ENCODE measurements at regions of chr5 and their contacts with region 1.

Region 1: GRCh38 chr5:68272289-68272688 is 56.7 kb downstream of the PIK3R1 start:
- DNase-seq: peak in 2 of 5 donors; percentile 44 to 50
- H3K4me3 ChIP-seq: no peak overlapping the region
- H3K4me3 Mint-ChIP-seq: peak overlapping the region in 4 of 8 donors; percentile 15 to 46 (median 22)
- H3K27ac ChIP-seq: no peak overlapping the region
- H3K27ac Mint-ChIP-seq: peak overlapping the region; percentile 56 to 99 (median 80)
- H3K4me1 ChIP-seq: peaks cover 97% of the 10 kb centered on the region
- H3K4me1 Mint-ChIP-seq: peaks cover 66 to 95% (median 81%) of the 10 kb centered on the region in 4 donors
- H3K27me3 ChIP-seq: no peaks in the 10 kb centered on the region
- H3K27me3 Mint-ChIP-seq: no peaks in the 10 kb centered on the region

Region 2: GRCh38 chr5:68086857-68087256 is 185.4 kb before region 1 on chr5:
- CTCF ChIA-PET with region 1: no interaction called
- POLR2A ChIA-PET with region 1: no interaction called
- intact Hi-C with region 1: no loop called
- DNase-seq: no peak
- H3K4me3 ChIP-seq: no peak overlapping the region
- H3K4me3 Mint-ChIP-seq: no peak overlapping the region
- H3K27ac ChIP-seq: no peak overlapping the region
- H3K27ac Mint-ChIP-seq: no peak overlapping the region
- H3K4me1 ChIP-seq: no peaks in the 10 kb centered on the region
- H3K4me1 Mint-ChIP-seq: no peaks in the 10 kb centered on the region
- H3K27me3 ChIP-seq: no peaks in the 10 kb centered on the region
- H3K27me3 Mint-ChIP-seq: peaks cover 4 to 10% of the 10 kb centered on the region in 2 donors

Region 3: DNA sequence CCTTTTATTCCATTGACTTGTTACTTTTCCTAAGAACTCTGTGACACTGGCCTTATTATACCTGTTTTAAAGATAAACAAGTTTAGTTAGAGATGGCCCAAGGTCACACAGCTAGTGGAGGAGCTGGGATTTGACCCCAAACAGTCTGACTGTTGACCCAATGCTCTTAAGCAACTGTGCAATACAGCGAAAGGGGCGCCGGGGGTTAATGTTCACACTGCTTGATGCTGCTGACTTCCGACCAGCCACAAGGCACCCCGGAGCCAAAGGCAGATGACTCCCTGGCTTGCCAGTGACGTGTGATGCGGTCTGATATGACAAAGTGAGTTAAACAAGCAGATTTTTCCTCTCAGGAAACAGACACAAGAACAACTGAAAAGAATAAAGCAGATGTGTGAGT is 32.8 kb before region 1 on chr5:
- CTCF ChIA-PET with region 1: interaction called, 7 read pairs
- POLR2A ChIA-PET with region 1: no interaction called
- intact Hi-C with region 1: loop called (anchors 5 kb)
- DNase-seq: peak; percentile 76 to 93 (median 79)
- H3K4me3 ChIP-seq: no peak overlapping the region
- H3K4me3 Mint-ChIP-seq: peak overlapping the region in 7 of 8 donors; percentile 34 to 76 (median 60)
- H3K27ac ChIP-seq: peak overlapping the region; percentile 20
- H3K27ac Mint-ChIP-seq: peak overlapping the region; percentile 73 to 97 (median 89)
- H3K4me1 ChIP-seq: peaks cover 77% of the 10 kb centered on the region
- H3K4me1 Mint-ChIP-seq: peaks cover 67 to 90% (median 78%) of the 10 kb centered on the region in 4 donors
- H3K27me3 ChIP-seq: no peaks in the 10 kb centered on the region
- H3K27me3 Mint-ChIP-seq: no peaks in the 10 kb centered on the region

Region 4: DNA sequence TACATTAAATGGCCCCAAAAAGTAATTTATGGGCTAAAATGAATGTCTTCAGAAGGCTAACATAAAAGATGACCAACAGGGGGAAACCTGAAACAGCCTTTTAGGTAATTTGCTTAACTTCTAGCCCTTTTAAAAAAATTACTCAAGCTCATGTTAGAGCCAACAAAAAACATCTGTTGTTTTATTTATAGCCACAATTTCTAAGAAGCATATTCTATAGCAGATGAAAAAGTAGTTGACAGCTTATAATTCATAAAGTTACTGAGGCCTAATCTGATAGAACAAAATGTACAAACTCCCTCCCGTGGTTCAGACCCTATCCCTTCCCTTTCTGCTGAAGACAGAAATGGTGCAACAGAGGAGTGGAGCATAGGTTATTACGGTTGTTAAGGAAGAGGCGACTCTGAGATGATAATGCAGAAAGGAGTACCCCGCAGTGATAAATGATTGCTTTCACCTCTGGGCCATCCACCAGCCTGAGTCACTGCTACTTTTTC is 10.7 kb before region 1 on chr5:
- CTCF ChIA-PET with region 1: interaction called, 124 read pairs
- POLR2A ChIA-PET with region 1: interaction called, 179 read pairs
- intact Hi-C with region 1: loop called (anchors 1 kb)
- DNase-seq: no peak
- H3K4me3 ChIP-seq: no peak overlapping the region
- H3K4me3 Mint-ChIP-seq: peak overlapping the region in 3 of 8 donors; percentile 17 to 47 (median 31)
- H3K27ac ChIP-seq: no peak overlapping the region
- H3K27ac Mint-ChIP-seq: peak overlapping the region; percentile 22 to 78 (median 68)
- H3K4me1 ChIP-seq: peaks cover 93% of the 10 kb centered on the region
- H3K4me1 Mint-ChIP-seq: peaks cover 78 to 93% (median 85%) of the 10 kb centered on the region in 4 donors
- H3K27me3 ChIP-seq: no peaks in the 10 kb centered on the region
- H3K27me3 Mint-ChIP-seq: no peaks in the 10 kb centered on the region

Measured in CD4-positive, alpha-beta memory T cell (primary cell).